CD4-positive, alpha-beta memory T cell (primary cell): ENCODE measurements at regions of chr11 and their contacts with region 1.

Region 1: GRCh38 chr11:65083834-65084597 is at the starts of genes CDCA5 and ZFPL1:
- DNase-seq: peak; percentile 94 to 98 (median 97)
- H3K4me3 ChIP-seq: peak within 1 kb of the TSS; percentile 74 to 75
- H3K4me3 Mint-ChIP-seq: peak within 1 kb of the TSS; percentile 92 to 96 (median 94)
- H3K27ac ChIP-seq: peak within 1 kb of the TSS; percentile 94
- H3K27ac Mint-ChIP-seq: peak within 1 kb of the TSS; percentile 97 to 99 (median 98)
- H3K4me1 ChIP-seq: peaks cover 25% of the 10 kb centered on the region
- H3K4me1 Mint-ChIP-seq: peaks cover 9 to 42% (median 26%) of the 10 kb centered on the region in 4 donors
- H3K27me3 ChIP-seq: no peaks in the 10 kb centered on the region
- H3K27me3 Mint-ChIP-seq: no peaks in the 10 kb centered on the region
- total RNA-seq, gene CDCA5: 0.41 to 0.64 TPM
- total RNA-seq, gene ZFPL1: 48.6 to 51.9 TPM

Region 2: GRCh38 chr11:64924102-64924851 is 159.7 kb before region 1 on chr11 and contains the start of gene PPP2R5B:
- CTCF ChIA-PET with region 1: no interaction called
- POLR2A ChIA-PET with region 1: no interaction called
- intact Hi-C with region 1: loop called (anchors 1 kb)
- DNase-seq: peak; percentile 87 to 95 (median 90)
- H3K4me3 ChIP-seq: peak within 1 kb of the TSS; percentile 61 to 85
- H3K4me3 Mint-ChIP-seq: peak within 1 kb of the TSS; percentile 93 to 99 (median 96)
- H3K27ac ChIP-seq: peak within 1 kb of the TSS; percentile 78
- H3K27ac Mint-ChIP-seq: peak within 1 kb of the TSS; percentile 98 to 100 (median 99)
- H3K4me1 ChIP-seq: peaks cover 20% of the 10 kb centered on the region
- H3K4me1 Mint-ChIP-seq: peaks cover 9 to 15% (median 11%) of the 10 kb centered on the region in 4 donors
- H3K27me3 ChIP-seq: no peaks in the 10 kb centered on the region
- H3K27me3 Mint-ChIP-seq: no peaks in the 10 kb centered on the region
- total RNA-seq, gene PPP2R5B: 14.0 to 15.8 TPM

Region 3: GRCh38 chr11:64935359-64936081 is 148.5 kb before region 1 on chr11 and contains the start of gene GPHA2:
- CTCF ChIA-PET with region 1: no interaction called
- POLR2A ChIA-PET with region 1: no interaction called
- intact Hi-C with region 1: no loop called
- DNase-seq: no peak
- H3K4me3 ChIP-seq: no peak within 1 kb of the TSS
- H3K4me3 Mint-ChIP-seq: peak within 1 kb of the TSS in 1 of 8 donors; percentile 24
- H3K27ac ChIP-seq: no peak within 1 kb of the TSS
- H3K27ac Mint-ChIP-seq: peak within 1 kb of the TSS in 1 of 7 donors; percentile 46
- H3K4me1 ChIP-seq: no peaks in the 10 kb centered on the region
- H3K4me1 Mint-ChIP-seq: no peaks in the 10 kb centered on the region
- H3K27me3 ChIP-seq: no peaks in the 10 kb centered on the region
- H3K27me3 Mint-ChIP-seq: peaks cover 0 to 2% of the 10 kb centered on the region in 2 donors
- total RNA-seq, gene GPHA2: 0.47 TPM in 1 of 2 experiments, not detected in the other

Region 4: DNA sequence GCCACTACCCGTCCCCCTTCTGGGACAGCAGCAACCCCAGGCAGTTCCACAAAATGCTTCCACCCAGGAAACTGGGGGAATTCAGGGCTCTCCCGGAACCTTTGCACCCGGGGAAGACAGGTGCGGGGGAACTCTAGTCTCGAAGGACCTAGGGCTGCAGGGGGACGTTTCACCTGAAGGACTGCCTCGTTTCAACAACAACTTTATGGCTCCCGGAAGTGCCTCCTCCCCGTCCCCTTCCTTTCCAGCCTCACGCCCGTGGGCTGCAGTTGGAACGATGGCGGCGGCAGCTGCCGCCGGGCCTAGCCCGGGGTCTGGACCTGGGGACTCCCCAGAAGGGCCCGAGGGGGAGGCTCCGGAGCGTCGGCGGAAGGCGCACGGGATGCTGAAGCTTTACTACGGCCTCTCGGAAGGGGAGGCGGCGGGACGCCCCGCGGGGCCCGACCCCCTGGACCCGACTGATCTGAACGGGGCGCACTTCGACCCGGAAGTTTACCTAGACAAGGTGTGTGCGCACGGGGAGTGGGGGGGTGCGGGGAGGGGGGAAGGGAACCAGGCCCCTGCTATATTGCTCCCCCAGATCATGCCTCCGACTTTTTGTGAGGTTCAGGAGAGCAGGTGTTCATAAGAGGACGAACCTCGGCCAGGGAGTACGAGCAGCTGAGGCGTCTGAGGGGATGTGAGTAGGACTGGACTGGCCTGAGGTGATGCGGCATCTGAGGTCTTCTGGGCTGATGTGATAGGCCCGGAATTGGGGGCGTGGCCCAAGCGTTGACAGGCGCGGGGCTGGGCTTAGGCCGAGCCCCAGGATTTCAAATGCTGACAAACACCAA is 12.2 kb after region 1 on chr11 and contains the start of gene VPS51:
- CTCF ChIA-PET with region 1: interaction called, 9 read pairs
- POLR2A ChIA-PET with region 1: interaction called, 16 read pairs
- intact Hi-C with region 1: loop called (anchors 1 kb)
- DNase-seq: peak; percentile 87 to 92 (median 89)
- H3K4me3 ChIP-seq: peak within 1 kb of the TSS; percentile 47 to 74
- H3K4me3 Mint-ChIP-seq: peak within 1 kb of the TSS; percentile 86 to 95 (median 93)
- H3K27ac ChIP-seq: peak within 1 kb of the TSS; percentile 78
- H3K27ac Mint-ChIP-seq: peak within 1 kb of the TSS; percentile 95 to 97 (median 96)
- H3K4me1 ChIP-seq: peaks cover 18% of the 10 kb centered on the region
- H3K4me1 Mint-ChIP-seq: peaks cover 8 to 26% (median 17%) of the 10 kb centered on the region in 4 donors
- H3K27me3 ChIP-seq: no peaks in the 10 kb centered on the region
- H3K27me3 Mint-ChIP-seq: no peaks in the 10 kb centered on the region
- total RNA-seq, gene VPS51: 221 to 226 TPM